HepG2 (cell line): ENCODE measurements at regions of chr20 and their contacts with region 1.

Region 1: DNA sequence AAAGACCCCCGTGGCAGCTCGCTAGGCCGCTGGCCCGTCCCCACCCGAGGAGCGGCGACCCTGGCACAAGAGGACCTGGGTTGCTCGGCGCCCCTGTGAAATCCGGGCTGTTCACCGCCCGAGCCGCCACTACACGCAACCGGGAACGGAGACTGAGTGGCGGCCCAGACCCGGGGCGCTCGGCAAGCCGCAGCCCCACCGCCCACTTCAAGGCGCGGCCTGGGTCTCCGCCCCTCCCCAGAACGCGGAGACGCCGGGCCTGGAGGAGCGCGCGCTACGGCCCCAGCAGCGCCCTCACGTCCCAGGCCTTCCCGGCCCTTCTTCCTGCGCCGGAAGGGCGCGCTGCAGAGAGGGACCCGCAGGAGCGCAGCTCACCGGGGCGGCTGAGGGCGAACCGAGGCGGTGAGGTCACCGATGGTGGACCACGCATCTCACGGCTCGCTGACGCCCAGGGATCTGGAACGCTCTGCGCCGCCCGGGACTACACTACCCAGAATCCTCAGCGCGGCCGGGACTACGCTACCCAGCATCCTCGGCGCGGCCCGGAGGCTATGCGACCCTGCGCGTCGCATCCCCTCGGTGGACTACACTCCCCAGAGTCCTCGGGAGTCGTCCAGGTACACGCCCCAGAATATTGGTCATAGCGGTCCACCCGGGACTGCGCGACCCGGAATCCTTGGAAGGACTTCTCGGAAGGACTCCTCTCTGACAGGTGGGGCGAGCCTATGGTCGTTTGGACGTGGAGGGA is at the start of gene ZNF337:
- DNase-seq: peak; percentile 98
- ATAC-seq: peak; percentile 97
- H3K4me3 ChIP-seq: peak within 1 kb of the TSS; percentile 89 to 100 (median 94)
- H3K27ac ChIP-seq: peak within 1 kb of the TSS; percentile 87
- H3K4me1 ChIP-seq: peaks cover 34% of the 10 kb centered on the region
- H3K27me3 ChIP-seq: no peaks in the 10 kb centered on the region
- CTCF ChIP-seq: peak; percentile 86
- EP300 ChIP-seq: no peak; a peak in 2 of 4 replicates
- POLR2A ChIP-seq: peak; percentile 87 to 90
- RAD21 ChIP-seq: peak; percentile 92
- total RNA-seq, gene ZNF337: 19.0 and 19.6 TPM in 2 replicates

Region 2: GRCh38 chr20:25605148-25605547 is 91.4 kb before region 1 on chr20:
- CTCF ChIA-PET with region 1: no interaction called
- POLR2A ChIA-PET with region 1: no interaction called
- in situ Hi-C with region 1: no loop called
- intact Hi-C with region 1: no loop called
- DNase-seq: no peak
- ATAC-seq: no peak
- H3K4me3 ChIP-seq: no peak overlapping the region
- H3K27ac ChIP-seq: no peak overlapping the region
- H3K4me1 ChIP-seq: peaks cover 59% of the 10 kb centered on the region
- H3K27me3 ChIP-seq: no peaks in the 10 kb centered on the region
- CTCF ChIP-seq: no peak
- EP300 ChIP-seq: no peak
- POLR2A ChIP-seq: no peak
- RAD21 ChIP-seq: no peak

Region 3: GRCh38 chr20:25623736-25624499 is 72.6 kb before region 1 on chr20 and contains the start of gene NANP:
- CTCF ChIA-PET with region 1: no interaction called
- POLR2A ChIA-PET with region 1: no interaction called
- in situ Hi-C with region 1: no loop called
- intact Hi-C with region 1: loop called (anchors 1 kb)
- DNase-seq: peak; percentile 100
- ATAC-seq: peak; percentile 91
- H3K4me3 ChIP-seq: peak within 1 kb of the TSS; percentile 75 to 87 (median 80)
- H3K27ac ChIP-seq: peak within 1 kb of the TSS; percentile 96
- H3K4me1 ChIP-seq: peaks cover 51% of the 10 kb centered on the region
- H3K27me3 ChIP-seq: no peaks in the 10 kb centered on the region; a peak in 1 of 5 replicates
- CTCF ChIP-seq: peak; percentile 65
- EP300 ChIP-seq: peak in 1 of 2 experiments; percentile 30; a peak in 2 of 4 replicates
- POLR2A ChIP-seq: peak; percentile 97 to 98
- RAD21 ChIP-seq: peak; percentile 62
- total RNA-seq, gene NANP: 21.5 and 31.0 TPM in 2 replicates

Region 4: GRCh38 chr20:25720294-25720693 is 23.7 kb after region 1 on chr20:
- CTCF ChIA-PET with region 1: no interaction called
- POLR2A ChIA-PET with region 1: interaction called, 3 read pairs
- in situ Hi-C with region 1: no loop called
- intact Hi-C with region 1: loop called (anchors 1 kb)
- DNase-seq: no peak
- ATAC-seq: peak; percentile 32; the same call in 2 of the 3 replicates
- H3K4me3 ChIP-seq: no peak overlapping the region
- H3K27ac ChIP-seq: no peak overlapping the region
- H3K4me1 ChIP-seq: peaks cover 26% of the 10 kb centered on the region
- H3K27me3 ChIP-seq: no peaks in the 10 kb centered on the region
- CTCF ChIP-seq: no peak
- EP300 ChIP-seq: no peak
- POLR2A ChIP-seq: no peak
- RAD21 ChIP-seq: no peak

Region 5: DNA sequence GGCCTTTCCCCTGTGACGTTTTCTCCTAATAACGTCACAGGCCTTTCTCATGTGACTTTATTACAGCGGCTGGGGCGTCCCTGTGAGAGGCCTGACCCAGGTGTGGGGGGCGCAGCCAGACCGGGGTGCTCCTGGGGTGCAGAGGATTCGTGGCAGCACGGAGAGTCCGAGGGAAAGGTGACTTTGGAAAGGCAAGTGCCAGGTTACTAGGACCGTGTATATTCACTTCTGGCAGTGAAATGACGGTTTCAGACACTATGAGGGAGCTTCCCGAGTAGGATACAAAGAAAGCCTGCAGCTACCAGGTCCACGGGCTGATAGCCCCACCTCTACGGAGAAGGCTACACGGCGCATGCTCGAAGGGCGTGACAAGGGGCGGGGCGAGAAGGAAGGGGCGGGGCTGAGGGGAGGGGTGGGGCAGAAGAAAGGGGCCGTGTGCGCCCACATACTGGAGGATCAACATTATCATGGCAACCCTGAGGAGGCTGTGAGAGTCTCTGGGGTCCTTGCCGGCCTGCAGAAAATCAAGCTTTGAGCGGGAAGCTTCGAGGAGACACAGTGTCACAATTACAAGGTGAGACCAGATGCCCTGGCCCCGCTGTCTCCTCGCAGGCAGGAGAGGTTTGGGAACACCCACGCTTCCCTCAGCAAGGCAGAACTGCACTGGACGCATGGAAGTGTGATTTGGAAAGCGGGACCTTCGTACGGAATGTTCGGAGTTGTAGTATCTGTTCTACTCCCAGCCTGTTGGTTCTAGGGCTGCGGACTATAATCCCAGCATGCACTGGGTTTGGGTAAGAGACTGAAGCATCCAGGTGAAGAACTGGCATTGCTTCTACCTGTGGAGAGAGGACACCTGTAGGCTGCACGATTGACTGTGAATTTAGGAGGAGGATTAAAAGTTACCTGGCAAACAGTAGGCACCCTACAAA is 54.5 kb after region 1 on chr20:
- CTCF ChIA-PET with region 1: no interaction called
- POLR2A ChIA-PET with region 1: interaction called, 5 read pairs
- in situ Hi-C with region 1: no loop called
- intact Hi-C with region 1: loop called (anchors 2 kb)
- DNase-seq: peak; percentile 70
- ATAC-seq: peak; percentile 96
- H3K4me3 ChIP-seq: peak overlapping the region; percentile 62 to 85 (median 74)
- H3K27ac ChIP-seq: peak overlapping the region; percentile 19
- H3K4me1 ChIP-seq: peaks cover 24% of the 10 kb centered on the region
- H3K27me3 ChIP-seq: no peaks in the 10 kb centered on the region; a peak in 1 of 5 replicates
- CTCF ChIP-seq: no peak
- EP300 ChIP-seq: no peak
- POLR2A ChIP-seq: peak; percentile 73 to 95
- RAD21 ChIP-seq: no peak

Region 6: GRCh38 chr20:25859649-25860530 is 163.3 kb after region 1 on chr20:
- CTCF ChIA-PET with region 1: no interaction called
- POLR2A ChIA-PET with region 1: no interaction called
- in situ Hi-C with region 1: no loop called
- intact Hi-C with region 1: loop called (anchors 2 kb)
- DNase-seq: peak; percentile 65
- ATAC-seq: peak; percentile 66
- H3K4me3 ChIP-seq: peak overlapping the region; percentile 24 to 75 (median 48)
- H3K27ac ChIP-seq: no peak overlapping the region
- H3K4me1 ChIP-seq: peaks cover 58% of the 10 kb centered on the region
- H3K27me3 ChIP-seq: peaks cover 12 to 57% of the 10 kb centered on the region in 2 experiments; a peak in 4 of 5 replicates
- CTCF ChIP-seq: no peak
- EP300 ChIP-seq: no peak
- POLR2A ChIP-seq: no peak
- RAD21 ChIP-seq: no peak